ENCODE measurements at regions of chr6 and their contacts with region 1.

Region 1: GRCh38 chr6:152982768-152983636 is at the start of gene FBXO5:
- DNase-seq: peak; percentile 97
- H3K4me3 ChIP-seq: peak within 1 kb of the TSS; percentile 76 to 99 (median 97)
- H3K27ac ChIP-seq: peak within 1 kb of the TSS; percentile 86
- H3K4me1 ChIP-seq: peaks cover 41% of the 10 kb centered on the region
- H3K27me3 ChIP-seq: no peaks in the 10 kb centered on the region
- CTCF ChIP-seq: no peak
- POLR2A ChIP-seq: peak; percentile 81
- total RNA-seq, gene FBXO5: 27.1 and 28.1 TPM in 2 replicates

Region 2: DNA sequence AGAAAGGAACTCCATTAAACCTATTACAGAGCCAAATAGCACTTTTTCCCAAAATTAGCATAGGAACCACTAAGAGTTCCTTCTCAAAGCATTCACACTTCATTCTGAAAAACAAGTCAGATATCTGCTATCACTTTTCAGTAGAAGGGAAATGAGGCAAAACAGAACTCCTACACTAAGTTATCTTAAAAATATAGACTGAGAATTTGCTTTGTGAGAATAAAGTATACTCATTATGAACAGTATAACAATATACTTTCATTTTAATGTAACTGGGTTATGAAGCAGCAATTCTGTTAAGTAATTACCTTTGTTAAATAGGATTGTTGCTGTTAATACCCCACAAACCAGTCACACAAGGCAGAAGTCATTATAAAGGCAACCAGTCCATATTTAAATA is 10.8 kb after region 1 on chr6:
- CTCF ChIA-PET with region 1: interaction called, 4 read pairs
- POLR2A ChIA-PET with region 1: interaction called, 8 read pairs
- dilution Hi-C with region 1: no loop called
- intact Hi-C with region 1: loop called (anchors 1 kb)
- DNase-seq: no peak
- H3K4me3 ChIP-seq: no peak overlapping the region
- H3K27ac ChIP-seq: no peak overlapping the region
- H3K4me1 ChIP-seq: no peaks in the 10 kb centered on the region
- H3K27me3 ChIP-seq: no peaks in the 10 kb centered on the region
- CTCF ChIP-seq: no peak
- POLR2A ChIP-seq: no peak

Region 3: GRCh38 chr6:153002607-153003365 is 19.8 kb after region 1 on chr6 and contains the start of gene MTRF1L:
- CTCF ChIA-PET with region 1: interaction called, 3 read pairs
- POLR2A ChIA-PET with region 1: no interaction called
- dilution Hi-C with region 1: no loop called
- intact Hi-C with region 1: loop called (anchors 1 kb)
- DNase-seq: peak; percentile 97
- H3K4me3 ChIP-seq: peak within 1 kb of the TSS; percentile 72 to 96 (median 90)
- H3K27ac ChIP-seq: peak within 1 kb of the TSS; percentile 77
- H3K4me1 ChIP-seq: peaks cover 22% of the 10 kb centered on the region
- H3K27me3 ChIP-seq: no peaks in the 10 kb centered on the region
- CTCF ChIP-seq: no peak
- POLR2A ChIP-seq: peak; percentile 92
- total RNA-seq, gene MTRF1L: 27.5 and 31.2 TPM in 2 replicates

Region 4: DNA sequence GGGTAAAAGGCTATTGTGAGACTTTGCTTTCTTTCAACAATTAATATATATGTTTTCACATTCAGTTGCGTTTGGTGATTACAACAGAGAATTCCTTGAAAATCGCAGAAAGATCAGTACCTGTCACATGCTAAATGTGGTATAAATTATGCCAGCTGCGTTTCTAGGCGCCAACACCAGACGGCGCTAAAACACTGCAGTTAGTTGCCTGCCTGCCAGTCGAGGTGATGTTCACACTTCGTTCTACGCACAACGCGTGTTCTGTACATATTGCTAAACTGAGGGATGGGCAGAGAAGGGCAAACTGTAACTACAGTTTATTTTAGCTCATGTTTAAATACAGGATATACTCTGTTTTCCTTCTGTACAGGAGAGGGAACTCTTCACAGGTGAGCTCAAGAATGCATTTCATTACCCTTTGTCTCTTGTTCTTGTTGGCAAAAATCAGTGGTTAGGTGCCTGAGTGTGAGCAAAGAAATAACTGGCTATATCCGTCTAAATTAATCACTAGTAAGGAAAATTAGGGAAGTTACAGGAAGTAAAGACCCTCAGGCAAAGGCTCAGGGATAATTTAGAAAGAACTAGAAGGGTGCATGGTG is 248.1 kb after region 1 on chr6:
- CTCF ChIA-PET with region 1: no interaction called
- POLR2A ChIA-PET with region 1: no interaction called
- dilution Hi-C with region 1: no loop called
- intact Hi-C with region 1: no loop called
- DNase-seq: peak; percentile 33
- H3K4me3 ChIP-seq: no peak overlapping the region
- H3K27ac ChIP-seq: no peak overlapping the region
- H3K4me1 ChIP-seq: no peaks in the 10 kb centered on the region
- H3K27me3 ChIP-seq: peaks cover 0 to 3% of the 10 kb centered on the region in 2 experiments
- CTCF ChIP-seq: peak; percentile 74 to 92
- POLR2A ChIP-seq: no peak